ENCODE measurements at regions of chr1 and their contacts with region 1.

Region 1: DNA sequence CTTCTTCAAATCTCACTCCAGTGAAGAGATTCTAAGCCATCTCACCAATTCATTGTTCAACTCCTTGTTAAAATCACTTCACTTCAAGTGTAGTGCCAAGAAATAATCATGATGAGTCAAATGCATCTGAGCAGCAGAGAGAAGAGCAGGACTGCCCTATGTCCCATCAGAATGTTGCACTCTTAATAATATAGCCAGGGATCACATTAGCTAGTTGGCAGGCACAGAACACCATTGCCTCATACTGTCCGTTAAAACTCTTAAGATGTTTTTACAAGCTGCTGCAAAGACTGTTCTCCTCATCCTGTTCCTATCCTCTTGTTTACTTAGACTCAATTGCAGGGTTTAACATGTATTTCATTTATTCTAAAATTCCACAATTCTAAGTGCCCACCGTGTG is 432.9 kb downstream of the PLPP3 start:
- DNase-seq: peak; percentile 76
- H3K4me3 ChIP-seq: no peak overlapping the region
- H3K27ac ChIP-seq: peak overlapping the region; percentile 53 to 66 (median 62)
- H3K4me1 ChIP-seq: peaks cover 0 to 22% (median 15%) of the 10 kb centered on the region in 4 donors
- H3K27me3 ChIP-seq: no peaks in the 10 kb centered on the region
- CTCF ChIP-seq: no peak
- EP300 ChIP-seq: no peak
- POLR2A ChIP-seq: no peak

Region 2: DNA sequence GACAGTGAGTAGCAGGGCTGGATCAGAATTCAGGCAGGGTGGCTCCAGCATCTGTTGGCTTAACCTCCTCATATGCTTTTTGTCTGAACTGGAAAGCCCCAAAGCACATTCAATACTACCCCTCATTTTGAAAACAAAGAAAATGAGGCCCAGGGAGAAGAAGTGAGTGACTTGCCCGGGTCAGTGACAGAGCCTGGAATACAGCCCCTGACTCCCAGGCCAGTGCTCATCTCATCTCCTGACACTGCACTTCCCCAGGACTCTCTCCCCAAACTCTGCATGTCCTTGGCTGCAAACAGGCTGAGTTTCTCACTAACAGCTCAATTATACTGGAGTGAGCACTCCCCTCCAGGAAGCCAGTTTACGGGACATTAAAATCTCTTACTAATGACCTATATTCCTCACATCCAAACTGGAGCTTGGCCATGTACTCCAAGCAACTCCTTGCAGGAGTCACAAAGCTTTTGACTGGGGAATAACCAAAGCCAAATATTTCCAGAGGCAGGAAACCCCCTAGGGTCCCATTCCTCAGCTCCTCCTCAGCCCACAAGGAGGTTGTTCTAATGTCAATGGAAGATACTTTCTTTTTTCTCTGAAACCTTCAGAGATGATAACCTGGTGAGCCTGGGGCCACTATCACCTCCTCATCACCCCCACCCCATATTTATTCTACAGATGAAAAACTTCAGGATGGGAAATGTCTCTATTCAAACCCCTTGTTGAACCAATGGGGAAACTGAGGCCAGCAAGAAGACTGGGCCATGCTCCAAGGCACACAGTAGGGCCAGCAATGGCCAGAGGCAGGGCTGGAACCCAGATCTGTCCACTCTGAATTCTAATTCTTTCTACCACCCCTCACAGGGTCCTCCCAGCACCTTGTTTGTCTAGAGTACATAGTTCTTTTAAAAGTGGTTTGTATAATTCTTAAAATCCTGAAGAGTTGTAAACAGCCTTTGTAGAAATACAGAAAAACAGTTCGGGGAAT is 305.9 kb after region 1 on chr1:
- intact Hi-C with region 1: loop called (anchors 5 kb)
- DNase-seq: peak; percentile 81
- H3K4me3 ChIP-seq: no peak overlapping the region
- H3K27ac ChIP-seq: peak overlapping the region; percentile 16 to 72 (median 60)
- H3K4me1 ChIP-seq: peaks cover 0 to 40% (median 23%) of the 10 kb centered on the region in 4 donors
- H3K27me3 ChIP-seq: no peaks in the 10 kb centered on the region
- CTCF ChIP-seq: no peak
- EP300 ChIP-seq: no peak
- POLR2A ChIP-seq: no peak